Activated CD4-positive, alpha-beta memory T cell treated with anti-CD3 and anti-CD28 coated beads, Interleukin-2, amount 10 ng/mL, durations not matched to agents 7 days and 5 days (primary cell): ENCODE measurements at regions of chr5 and their contacts with region 1.

Region 1: DNA sequence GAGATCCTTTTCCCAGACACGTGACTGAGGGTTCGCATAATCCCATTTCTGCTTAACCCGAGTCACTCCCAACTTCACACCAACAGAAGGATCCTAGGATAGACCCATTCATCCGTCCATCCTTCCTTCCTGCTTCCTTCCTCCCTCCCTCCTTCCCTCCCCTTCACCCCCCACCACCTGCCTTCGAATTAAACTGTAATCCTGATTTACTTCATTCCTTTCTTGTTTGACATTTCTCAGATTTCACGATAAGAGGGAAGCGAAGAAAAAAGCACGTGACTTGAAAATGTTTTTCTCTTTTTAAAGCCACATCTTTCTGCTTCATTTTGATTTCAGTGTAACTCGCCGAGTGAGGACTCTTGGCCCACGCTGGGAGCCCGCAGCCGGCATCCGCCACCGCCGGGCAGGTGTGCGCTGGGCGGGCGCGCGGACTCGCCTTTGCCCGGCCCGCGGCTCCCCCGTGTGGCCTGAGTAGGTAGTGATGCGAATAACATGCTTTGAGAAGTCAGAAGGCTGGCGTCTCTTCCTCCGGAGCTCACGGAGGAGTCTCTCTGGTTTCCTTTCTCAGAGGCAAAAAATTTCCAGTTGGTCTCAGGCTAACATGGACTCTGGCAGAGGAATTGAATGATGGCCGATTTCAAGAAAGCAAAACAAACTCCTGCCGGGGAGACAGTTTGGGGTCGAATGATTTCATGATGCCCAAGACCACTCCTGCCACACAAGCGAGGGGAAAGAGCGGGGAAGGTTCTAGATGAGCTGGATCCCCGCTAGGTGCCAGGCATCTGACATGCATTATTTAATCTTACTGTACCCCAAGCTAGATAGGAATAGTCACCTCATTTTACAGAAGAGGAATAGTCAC is 117.7 kb downstream of the SLC12A2 start:
- DNase-seq: peak; percentile 83
- H3K4me3 Mint-ChIP-seq: no peak overlapping the region
- H3K27ac Mint-ChIP-seq: no peak overlapping the region
- H3K4me1 Mint-ChIP-seq: peaks cover 26% of the 10 kb centered on the region
- H3K27me3 Mint-ChIP-seq: peaks cover 10% of the 10 kb centered on the region

Region 2: DNA sequence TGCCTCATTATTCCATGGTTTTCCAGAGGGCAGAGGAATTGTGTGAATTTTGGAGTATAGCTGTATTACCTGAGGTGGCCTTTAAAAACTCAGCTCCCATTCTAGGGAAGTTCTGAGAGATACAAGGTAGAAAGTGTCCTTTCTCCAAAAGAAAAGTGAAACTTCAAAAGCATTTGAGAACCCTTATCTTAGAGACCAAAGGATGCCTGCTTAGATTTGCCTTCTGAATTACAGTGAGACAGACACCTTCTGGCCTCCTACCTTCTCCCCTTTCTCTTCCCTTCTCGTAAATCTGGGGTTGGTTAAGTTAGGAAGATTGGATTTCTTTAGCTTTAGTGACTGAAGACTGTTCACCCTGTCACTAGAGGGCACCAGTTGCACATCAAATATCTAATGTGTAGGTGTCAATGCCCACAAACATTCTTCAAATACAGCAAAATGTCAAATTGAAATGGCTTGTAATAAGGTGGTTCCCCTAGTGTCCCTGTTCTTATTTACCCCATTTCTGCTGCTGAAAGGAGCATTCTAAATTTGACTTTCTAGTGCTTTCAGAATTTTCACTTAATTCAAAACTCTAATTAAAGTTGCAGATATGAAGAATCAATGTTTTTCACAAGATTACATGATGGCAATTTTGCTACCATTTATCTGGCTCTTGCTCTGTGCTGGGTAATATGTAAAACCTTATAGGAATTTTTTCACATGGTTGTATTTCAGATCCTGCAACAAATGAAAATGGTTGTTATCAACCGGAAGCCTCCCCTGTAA is 637.1 kb before region 1 on chr5:
- CTCF ChIA-PET with region 1: interaction called, 15 read pairs
- POLR2A ChIA-PET with region 1: no interaction called
- DNase-seq: peak; percentile 38
- H3K4me3 Mint-ChIP-seq: no peak overlapping the region
- H3K27ac Mint-ChIP-seq: no peak overlapping the region
- H3K4me1 Mint-ChIP-seq: peaks cover 15% of the 10 kb centered on the region
- H3K27me3 Mint-ChIP-seq: peaks cover 12% of the 10 kb centered on the region